ENCODE measurements at regions of chr11 and their contacts with region 1.

Region 1: DNA sequence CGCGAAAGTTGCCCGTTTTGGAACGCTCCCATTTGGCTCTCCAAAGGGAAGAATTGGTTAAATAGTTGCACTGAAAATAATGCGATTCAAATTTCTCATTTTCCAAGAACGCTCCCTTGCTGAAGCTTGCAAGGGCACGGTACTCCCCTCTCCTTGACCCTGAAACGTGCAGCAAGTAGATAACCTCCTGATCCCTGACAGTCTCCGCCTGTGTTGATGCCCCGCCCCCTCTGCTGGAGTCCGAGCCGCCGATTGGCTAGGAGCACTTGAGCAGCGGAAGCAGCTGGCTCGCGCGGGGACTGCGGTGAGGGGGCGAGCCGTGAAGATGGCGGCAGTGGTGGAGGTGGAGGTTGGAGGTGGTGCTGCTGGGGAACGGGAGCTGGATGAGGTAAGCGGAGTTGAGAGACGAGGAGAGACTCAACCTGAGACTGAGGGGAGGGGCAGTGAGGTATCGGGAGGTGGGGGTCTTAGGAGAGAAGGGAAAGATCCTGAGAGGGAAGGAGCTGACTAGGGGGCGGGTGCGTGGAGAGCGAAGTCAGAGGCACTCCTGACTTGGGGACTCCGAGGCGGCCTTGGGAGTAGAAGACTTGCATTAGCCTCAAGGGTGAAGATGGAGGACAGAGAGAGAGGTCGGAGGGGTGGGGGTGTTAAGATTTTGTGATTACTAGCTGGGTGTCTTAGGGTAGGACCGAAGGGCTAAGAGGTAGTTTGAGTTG is at the start of gene RNF121:
- DNase-seq: peak; percentile 96 to 99 (median 96)
- H3K4me3 ChIP-seq: peak within 1 kb of the TSS; percentile 92 to 96
- H3K4me3 Mint-ChIP-seq: peak within 1 kb of the TSS; percentile 95 to 100 (median 98)
- H3K27ac ChIP-seq: peak within 1 kb of the TSS; percentile 84
- H3K27ac Mint-ChIP-seq: peak within 1 kb of the TSS; percentile 92 to 100 (median 99)
- H3K4me1 ChIP-seq: peaks cover 41% of the 10 kb centered on the region
- H3K4me1 Mint-ChIP-seq: peaks cover 40 to 60% (median 50%) of the 10 kb centered on the region in 4 donors
- H3K27me3 ChIP-seq: no peaks in the 10 kb centered on the region
- H3K27me3 Mint-ChIP-seq: no peaks in the 10 kb centered on the region
- total RNA-seq, gene RNF121: 28.0 to 33.0 TPM

Region 2: GRCh38 chr11:71787098-71787823 is 141.6 kb before region 1 on chr11:
- CTCF ChIA-PET with region 1: no interaction called
- POLR2A ChIA-PET with region 1: interaction called, 9 read pairs
- intact Hi-C with region 1: loop called (anchors 1 kb)
- DNase-seq: peak; percentile 89 to 97 (median 95)
- H3K4me3 ChIP-seq: peak overlapping the region in 1 of 2 donors; percentile 91
- H3K4me3 Mint-ChIP-seq: peak overlapping the region; percentile 93 to 99 (median 96)
- H3K27ac ChIP-seq: peak overlapping the region; percentile 65
- H3K27ac Mint-ChIP-seq: peak overlapping the region; percentile 87 to 100 (median 99)
- H3K4me1 ChIP-seq: peaks cover 3% of the 10 kb centered on the region
- H3K4me1 Mint-ChIP-seq: peaks cover 10 to 18% (median 13%) of the 10 kb centered on the region in 4 donors
- H3K27me3 ChIP-seq: no peaks in the 10 kb centered on the region
- H3K27me3 Mint-ChIP-seq: no peaks in the 10 kb centered on the region

Region 3: DNA sequence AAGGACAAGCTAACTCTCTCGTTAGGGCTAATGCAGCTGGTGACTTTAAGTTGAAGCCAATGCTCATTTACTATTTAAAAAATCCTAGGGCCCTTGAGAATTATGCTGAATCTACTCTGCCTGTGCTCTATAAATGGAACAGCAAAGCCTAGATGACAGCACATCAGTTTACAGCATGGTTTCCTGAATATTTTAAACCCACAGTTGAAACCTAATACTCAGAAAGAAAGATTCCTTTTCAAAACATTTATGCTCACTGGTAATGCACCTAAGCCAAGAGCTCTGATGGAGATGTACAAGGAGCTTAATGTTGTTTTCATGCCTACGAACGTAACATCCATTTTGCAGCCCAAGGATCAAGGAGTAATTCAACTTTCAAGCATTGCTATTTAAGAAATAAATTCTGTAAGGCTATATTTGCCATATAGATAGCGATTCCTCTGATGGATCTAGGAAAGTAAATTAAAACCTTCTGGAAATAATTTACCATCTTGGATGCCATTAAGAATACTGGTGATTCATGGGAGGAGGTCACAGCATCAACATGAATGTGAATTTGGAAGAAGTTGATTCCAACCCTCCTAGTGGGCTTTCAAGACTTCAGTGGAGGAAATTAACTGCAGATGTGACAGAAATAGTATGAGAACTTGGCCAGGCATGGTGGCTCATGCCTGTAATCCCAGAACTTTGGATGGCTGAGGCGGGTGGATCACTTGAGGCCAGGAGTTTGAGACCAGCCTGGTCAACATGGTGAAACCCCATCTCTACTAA is 15.0 kb before region 1 on chr11:
- CTCF ChIA-PET with region 1: no interaction called
- POLR2A ChIA-PET with region 1: no interaction called
- intact Hi-C with region 1: no loop called
- DNase-seq: no peak
- H3K4me3 ChIP-seq: no peak overlapping the region
- H3K4me3 Mint-ChIP-seq: no peak overlapping the region
- H3K27ac ChIP-seq: no peak overlapping the region
- H3K27ac Mint-ChIP-seq: no peak overlapping the region
- H3K4me1 ChIP-seq: no peaks in the 10 kb centered on the region
- H3K4me1 Mint-ChIP-seq: peaks cover 0 to 2% (median 0%) of the 10 kb centered on the region in 4 donors
- H3K27me3 ChIP-seq: no peaks in the 10 kb centered on the region
- H3K27me3 Mint-ChIP-seq: no peaks in the 10 kb centered on the region

Region 4: GRCh38 chr11:72112321-72113219 is 183.7 kb after region 1 on chr11 and contains the start of gene ANAPC15:
- CTCF ChIA-PET with region 1: no interaction called
- POLR2A ChIA-PET with region 1: interaction called, 33 read pairs
- intact Hi-C with region 1: loop called (anchors 1 kb)
- DNase-seq: peak; percentile 98 to 100 (median 99)
- H3K4me3 ChIP-seq: peak within 1 kb of the TSS; percentile 79 to 97
- H3K4me3 Mint-ChIP-seq: peak within 1 kb of the TSS; percentile 96 to 99 (median 97)
- H3K27ac ChIP-seq: peak within 1 kb of the TSS; percentile 97
- H3K27ac Mint-ChIP-seq: peak within 1 kb of the TSS; percentile 98 to 100 (median 99)
- H3K4me1 ChIP-seq: peaks cover 18% of the 10 kb centered on the region
- H3K4me1 Mint-ChIP-seq: peaks cover 15 to 34% (median 23%) of the 10 kb centered on the region in 4 donors
- H3K27me3 ChIP-seq: no peaks in the 10 kb centered on the region
- H3K27me3 Mint-ChIP-seq: peaks cover 2 to 3% of the 10 kb centered on the region in 2 donors
- total RNA-seq, gene ANAPC15: 38.6 to 40.2 TPM

Measured in CD4-positive, alpha-beta memory T cell (primary cell).